ENCODE measurements at regions of chr20 and their contacts with region 1.

Region 1: DNA sequence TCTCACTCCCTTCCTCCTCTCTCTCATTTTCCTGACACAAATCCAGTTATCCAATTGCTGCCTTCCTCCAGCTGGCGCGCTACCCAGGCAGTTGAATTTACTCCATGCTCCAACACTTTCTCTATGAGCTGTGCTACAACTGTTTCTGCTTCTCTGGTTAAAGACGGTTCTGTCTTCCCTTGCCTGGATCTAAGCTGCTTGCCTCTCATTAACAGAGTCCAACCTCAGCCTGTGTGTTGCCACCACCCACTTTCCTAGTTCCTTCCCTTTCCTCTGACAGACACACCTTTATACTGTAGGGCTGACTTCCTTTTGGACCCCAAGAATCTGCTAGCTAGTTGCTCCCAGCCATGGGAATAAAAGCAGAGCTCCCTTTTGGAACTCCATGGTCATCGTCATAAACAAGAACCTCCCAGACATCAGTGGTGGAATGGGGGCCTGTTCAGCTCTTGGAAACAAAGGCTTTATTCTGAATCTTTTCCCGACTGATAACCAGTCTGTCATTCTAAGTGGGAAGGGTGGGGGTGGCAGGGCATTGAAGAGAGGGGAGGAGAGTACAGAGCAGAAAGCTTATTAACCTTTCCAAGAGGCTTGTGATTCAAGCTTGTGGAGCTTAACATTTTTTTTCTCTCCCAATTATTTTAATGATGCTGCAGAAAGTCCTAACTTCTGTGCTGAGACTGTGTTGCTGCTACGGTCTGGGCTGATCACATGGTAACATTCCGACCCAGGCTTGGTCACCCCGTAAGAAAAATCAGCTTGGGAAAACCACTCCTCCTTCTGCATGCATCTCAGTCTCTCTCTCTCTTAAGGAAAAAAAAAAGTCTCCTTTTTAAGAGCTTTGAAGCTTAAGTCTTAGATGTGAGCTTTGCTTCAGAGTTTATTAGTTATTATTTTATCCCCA is 31.3 kb upstream of the BMP2 start:
- DNase-seq: no peak
- ATAC-seq: peak; percentile 52
- H3K4me3 ChIP-seq: no peak overlapping the region
- H3K27ac ChIP-seq: no peak overlapping the region
- H3K4me1 ChIP-seq: no peaks in the 10 kb centered on the region
- H3K27me3 ChIP-seq: no peaks in the 10 kb centered on the region; a peak in 1 of 4 replicates
- CTCF ChIP-seq: no peak
- EP300 ChIP-seq: no peak
- POLR2A ChIP-seq: no peak
- RAD21 ChIP-seq: no peak

Region 2: DNA sequence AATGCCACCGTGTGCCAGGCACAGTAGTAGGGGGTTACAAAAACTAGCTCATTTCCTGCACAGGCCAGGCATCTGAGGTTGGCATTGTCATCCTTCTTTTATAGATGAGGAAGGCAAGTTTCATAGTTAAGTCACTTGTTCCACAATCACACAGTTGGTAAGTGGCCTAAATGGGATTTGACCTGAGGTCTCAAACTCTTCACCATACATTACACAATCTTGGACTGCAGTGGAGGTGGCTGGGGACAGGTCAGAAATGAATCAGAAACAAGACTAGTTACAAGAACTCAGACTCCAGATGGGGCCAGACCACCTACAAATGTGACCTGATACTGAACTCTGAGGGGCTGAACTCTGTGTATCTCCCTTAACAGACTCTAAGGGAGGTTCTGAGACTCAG is 835.3 kb before region 1 on chr20:
- CTCF ChIA-PET with region 1: no interaction called
- POLR2A ChIA-PET with region 1: no interaction called
- RAD21 ChIA-PET with region 1: no interaction called
- SMC1A ChIA-PET with region 1: no interaction called
- in situ Hi-C with region 1: no loop called
- intact Hi-C with region 1: no loop called
- DNase-seq: no peak
- ATAC-seq: no peak
- H3K4me3 ChIP-seq: no peak overlapping the region
- H3K27ac ChIP-seq: no peak overlapping the region
- H3K4me1 ChIP-seq: no peaks in the 10 kb centered on the region
- H3K27me3 ChIP-seq: no peaks in the 10 kb centered on the region; a peak in 1 of 4 replicates
- CTCF ChIP-seq: no peak
- EP300 ChIP-seq: no peak
- POLR2A ChIP-seq: no peak
- RAD21 ChIP-seq: no peak

Region 3: DNA sequence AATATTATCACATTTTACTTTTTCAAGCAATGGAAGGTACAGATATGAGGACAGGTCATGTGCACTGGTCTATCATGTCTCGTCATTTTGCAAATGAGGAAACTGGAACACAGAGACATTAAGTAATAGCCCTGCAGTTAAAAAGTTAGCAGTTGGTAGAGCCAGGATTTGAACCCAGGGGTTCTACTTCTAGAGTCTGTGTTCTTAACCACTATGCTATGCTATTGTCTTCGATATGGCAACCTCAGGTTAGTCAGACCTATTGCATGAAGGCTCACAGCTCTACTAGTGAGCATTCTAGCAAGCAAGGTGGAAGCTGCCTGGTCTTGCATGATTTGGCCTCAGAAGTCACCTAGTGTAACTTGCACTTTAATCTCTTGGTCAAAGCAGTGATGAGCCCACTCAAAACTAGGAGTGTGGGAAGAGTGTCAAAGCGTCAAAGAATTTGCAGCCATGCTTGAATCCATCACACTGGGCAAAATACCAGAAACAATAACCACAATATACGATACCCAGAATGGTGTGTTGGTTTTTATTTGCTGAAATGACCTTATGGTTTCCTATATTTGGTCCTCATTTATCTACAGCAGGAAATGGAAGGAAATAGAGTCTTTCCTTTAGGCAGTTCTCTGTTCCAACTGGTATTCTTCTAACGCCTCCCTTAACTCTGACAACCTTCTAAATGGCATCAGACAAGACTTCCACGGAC is 10.9 kb after region 1 on chr20:
- CTCF ChIA-PET with region 1: interaction called, 7 read pairs
- POLR2A ChIA-PET with region 1: no interaction called
- RAD21 ChIA-PET with region 1: interaction called, 3 read pairs
- SMC1A ChIA-PET with region 1: interaction called, 18 read pairs
- in situ Hi-C with region 1: no loop called
- intact Hi-C with region 1: no loop called
- DNase-seq: peak; percentile 45
- ATAC-seq: peak; percentile 86
- H3K4me3 ChIP-seq: no peak overlapping the region
- H3K27ac ChIP-seq: no peak overlapping the region
- H3K4me1 ChIP-seq: no peaks in the 10 kb centered on the region
- H3K27me3 ChIP-seq: no peaks in the 10 kb centered on the region
- CTCF ChIP-seq: no peak
- EP300 ChIP-seq: no peak
- POLR2A ChIP-seq: no peak
- RAD21 ChIP-seq: no peak

Region 4: DNA sequence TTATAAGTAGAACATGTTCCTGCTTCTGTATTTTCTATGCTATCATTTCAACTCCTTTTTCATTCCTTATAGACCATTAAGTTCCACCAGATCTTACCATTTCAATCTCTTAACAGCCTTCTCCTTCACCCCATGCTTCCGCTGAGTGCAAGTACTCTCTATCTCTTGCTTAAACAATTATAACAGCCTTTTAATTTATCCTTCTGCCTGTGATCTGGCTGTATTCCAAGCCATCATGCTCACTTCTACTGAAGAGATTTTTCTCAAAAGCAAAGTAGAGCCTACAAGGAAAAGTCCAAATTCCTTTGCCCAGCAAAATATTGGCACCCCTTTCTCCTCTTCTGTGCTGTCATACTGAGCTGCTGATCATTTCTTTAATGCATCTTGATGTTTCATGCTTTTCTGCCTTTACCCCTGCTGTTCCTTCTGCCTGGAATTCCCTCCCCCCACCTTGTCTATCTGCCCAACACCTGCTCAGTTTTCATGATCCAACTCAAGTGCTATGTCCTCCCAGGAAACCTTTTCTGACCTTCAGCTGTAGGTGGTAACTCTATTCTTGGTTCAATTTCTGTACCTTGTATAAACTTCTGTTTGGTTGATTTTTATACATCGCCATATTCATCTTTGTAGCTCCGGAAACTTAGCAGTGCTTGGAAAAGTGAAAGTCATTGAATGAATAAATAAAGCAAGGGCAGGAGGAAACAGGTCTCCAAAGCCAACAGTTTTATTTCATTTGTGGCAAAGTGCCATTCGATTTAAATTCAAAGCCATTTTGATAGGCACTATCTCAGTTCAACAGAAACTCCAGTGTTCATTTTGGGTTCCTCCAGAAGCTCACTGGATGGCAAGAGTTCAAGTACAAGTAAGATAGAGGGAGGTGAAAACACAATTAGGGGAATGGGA is 20.8 kb after region 1 on chr20:
- CTCF ChIA-PET with region 1: interaction called, 4 read pairs
- POLR2A ChIA-PET with region 1: interaction called, 4 read pairs
- RAD21 ChIA-PET with region 1: interaction called, 3 read pairs
- SMC1A ChIA-PET with region 1: interaction called, 11 read pairs
- in situ Hi-C with region 1: no loop called
- intact Hi-C with region 1: no loop called
- DNase-seq: no peak
- ATAC-seq: no peak
- H3K4me3 ChIP-seq: no peak overlapping the region
- H3K27ac ChIP-seq: no peak overlapping the region
- H3K4me1 ChIP-seq: no peaks in the 10 kb centered on the region
- H3K27me3 ChIP-seq: no peaks in the 10 kb centered on the region
- CTCF ChIP-seq: no peak
- EP300 ChIP-seq: no peak
- POLR2A ChIP-seq: no peak
- RAD21 ChIP-seq: no peak

Region 5: DNA sequence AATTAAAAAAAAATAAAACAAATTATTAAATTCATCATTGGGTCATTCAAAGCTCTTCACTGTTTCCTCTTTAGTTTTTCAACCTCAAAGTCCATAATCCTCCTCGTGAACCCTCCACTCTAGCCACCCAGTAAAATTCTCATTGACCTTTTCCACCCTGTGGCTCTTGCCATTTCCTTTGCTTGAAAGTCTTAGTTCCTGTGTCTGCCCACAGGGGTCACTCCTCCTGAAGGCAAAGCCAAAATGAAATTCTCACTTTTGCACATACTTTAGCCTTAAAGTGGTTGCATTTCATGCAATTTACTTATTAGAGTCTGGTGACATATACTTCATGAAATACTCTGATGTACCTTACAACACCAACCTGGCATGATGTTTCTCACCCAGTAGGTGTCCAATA is 295.0 kb after region 1 on chr20:
- CTCF ChIA-PET with region 1: no interaction called
- POLR2A ChIA-PET with region 1: no interaction called
- RAD21 ChIA-PET with region 1: no interaction called
- SMC1A ChIA-PET with region 1: no interaction called
- in situ Hi-C with region 1: no loop called
- intact Hi-C with region 1: no loop called
- DNase-seq: no peak
- ATAC-seq: peak; percentile 62
- H3K4me3 ChIP-seq: no peak overlapping the region
- H3K27ac ChIP-seq: no peak overlapping the region
- H3K4me1 ChIP-seq: no peaks in the 10 kb centered on the region
- H3K27me3 ChIP-seq: no peaks in the 10 kb centered on the region
- CTCF ChIP-seq: peak; percentile 23 to 33 (median 24); a peak in 2 of 6 replicates
- EP300 ChIP-seq: no peak
- POLR2A ChIP-seq: no peak
- RAD21 ChIP-seq: peak; percentile 35